SK-N-SH (cell line): ENCODE measurements at regions of chr5 and their contacts with region 1.

Region 1: DNA sequence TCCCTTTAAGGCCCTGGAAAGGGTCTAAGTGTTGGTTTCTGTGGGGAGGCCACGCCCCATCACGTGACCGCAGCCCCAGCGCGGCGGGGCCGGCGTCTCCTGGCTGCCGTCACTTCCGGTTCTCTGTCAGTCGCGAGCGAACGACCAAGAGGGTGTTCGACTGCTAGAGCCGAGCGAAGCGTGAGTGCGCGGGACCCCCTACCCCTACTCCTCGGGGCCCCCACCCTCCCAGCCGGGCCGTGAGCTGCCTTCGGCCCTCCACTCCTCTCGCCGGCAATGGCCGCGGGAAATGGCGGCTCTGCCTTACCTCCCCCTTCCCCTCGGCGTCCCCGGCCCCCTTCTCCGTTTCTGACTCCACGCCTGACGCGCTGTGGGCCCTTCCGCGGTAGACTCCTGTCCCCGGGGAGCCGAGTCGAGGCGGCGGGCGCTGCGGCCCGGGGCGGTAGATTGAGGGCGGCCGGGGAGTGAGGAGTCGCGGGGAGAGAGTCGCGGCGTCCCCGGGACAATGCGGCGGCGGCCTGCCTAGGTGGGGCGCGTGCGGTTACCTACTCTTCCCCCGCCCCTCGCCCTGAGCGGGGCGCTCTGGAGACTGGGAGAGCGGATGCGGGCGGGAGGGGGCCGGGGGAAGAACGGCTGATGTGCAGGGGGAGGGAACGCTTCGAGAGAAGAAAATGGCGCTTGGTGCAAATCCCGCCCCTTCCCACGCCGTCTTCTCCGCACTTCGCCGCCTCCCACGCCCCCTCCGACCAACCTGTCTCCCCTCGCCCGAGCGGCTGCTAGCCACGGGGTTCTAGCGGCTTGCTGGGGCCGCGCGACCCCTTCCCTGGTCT is at the start of gene SUB1:
- DNase-seq: peak; percentile 96
- H3K4me3 ChIP-seq: peak within 1 kb of the TSS; percentile 78
- H3K27ac ChIP-seq: peak within 1 kb of the TSS; percentile 92 to 99
- H3K4me1 ChIP-seq: peaks cover 5 to 7% of the 10 kb centered on the region in 2 experiments; a peak in 3 of 4 replicates
- H3K27me3 ChIP-seq: no peaks in the 10 kb centered on the region
- CTCF ChIP-seq: peak; percentile 29; the same call in 1 of the 2 replicates
- EP300 ChIP-seq: no peak; a peak in 1 of 4 replicates
- RAD21 ChIP-seq: no peak
- polyA plus RNA-seq, gene SUB1: 50.8 and 55.4 TPM in 2 replicates

Region 2: DNA sequence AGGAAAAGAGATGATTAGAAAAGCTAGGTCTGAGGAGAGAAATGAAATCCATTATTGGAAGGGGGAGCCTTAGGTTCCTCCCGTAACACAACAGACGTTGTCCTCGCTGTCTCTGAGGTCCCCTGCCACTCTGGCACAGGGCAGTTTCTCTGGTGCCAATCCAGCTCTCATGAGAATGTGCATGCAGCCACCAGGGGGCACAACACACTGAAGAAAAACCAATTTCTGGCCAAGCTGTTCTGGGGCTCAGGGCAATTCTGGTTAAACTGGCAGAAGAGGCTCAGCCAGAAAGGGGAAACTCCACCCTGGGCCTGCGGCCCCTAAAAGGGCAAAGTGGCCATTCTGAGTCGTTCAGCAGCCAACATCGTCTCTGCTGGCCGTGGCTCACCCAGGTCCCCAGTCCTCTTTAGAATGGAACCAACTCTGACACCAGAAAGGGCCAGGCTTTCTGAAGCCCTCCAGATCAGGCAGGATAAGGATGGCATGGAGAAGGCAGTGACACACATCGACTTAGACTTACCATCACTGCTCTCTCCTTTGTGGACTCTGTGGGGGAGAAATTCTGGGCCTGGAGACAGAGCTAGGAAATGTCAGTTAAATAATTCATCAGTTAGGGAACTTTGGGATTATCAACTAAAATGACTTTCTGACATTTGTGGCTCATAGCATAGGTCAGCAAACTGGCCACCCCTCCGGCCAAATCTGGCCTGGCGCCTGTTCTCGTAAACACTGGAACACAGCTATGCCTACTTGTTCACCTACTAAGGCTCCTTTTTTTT is 353.0 kb before region 1 on chr5:
- CTCF ChIA-PET with region 1: interaction called, 10 read pairs
- POLR2A ChIA-PET with region 1: no interaction called
- DNase-seq: peak; percentile 71
- H3K4me3 ChIP-seq: no peak overlapping the region; a peak in 1 of 4 replicates
- H3K27ac ChIP-seq: no peak overlapping the region
- H3K4me1 ChIP-seq: peaks cover 0 to 9% of the 10 kb centered on the region in 2 experiments; a peak in 1 of 4 replicates
- H3K27me3 ChIP-seq: no peaks in the 10 kb centered on the region
- CTCF ChIP-seq: peak; percentile 86
- EP300 ChIP-seq: no peak
- RAD21 ChIP-seq: peak; percentile 83

Region 3: GRCh38 chr5:32329308-32329834 is 256.3 kb before region 1 on chr5:
- CTCF ChIA-PET with region 1: no interaction called
- POLR2A ChIA-PET with region 1: no interaction called
- DNase-seq: peak; percentile 72
- H3K4me3 ChIP-seq: no peak overlapping the region
- H3K27ac ChIP-seq: no peak overlapping the region
- H3K4me1 ChIP-seq: no peaks in the 10 kb centered on the region
- H3K27me3 ChIP-seq: no peaks in the 10 kb centered on the region
- CTCF ChIP-seq: peak; percentile 57
- EP300 ChIP-seq: no peak
- RAD21 ChIP-seq: peak; percentile 79

Region 4: GRCh38 chr5:32476891-32477290 is 108.8 kb before region 1 on chr5:
- CTCF ChIA-PET with region 1: interaction called, 28 read pairs
- POLR2A ChIA-PET with region 1: no interaction called
- DNase-seq: no peak
- H3K4me3 ChIP-seq: no peak overlapping the region
- H3K27ac ChIP-seq: no peak overlapping the region
- H3K4me1 ChIP-seq: no peaks in the 10 kb centered on the region
- H3K27me3 ChIP-seq: no peaks in the 10 kb centered on the region; the same call in 1 of the 2 replicates
- CTCF ChIP-seq: no peak
- EP300 ChIP-seq: no peak
- RAD21 ChIP-seq: no peak

Region 5: DNA sequence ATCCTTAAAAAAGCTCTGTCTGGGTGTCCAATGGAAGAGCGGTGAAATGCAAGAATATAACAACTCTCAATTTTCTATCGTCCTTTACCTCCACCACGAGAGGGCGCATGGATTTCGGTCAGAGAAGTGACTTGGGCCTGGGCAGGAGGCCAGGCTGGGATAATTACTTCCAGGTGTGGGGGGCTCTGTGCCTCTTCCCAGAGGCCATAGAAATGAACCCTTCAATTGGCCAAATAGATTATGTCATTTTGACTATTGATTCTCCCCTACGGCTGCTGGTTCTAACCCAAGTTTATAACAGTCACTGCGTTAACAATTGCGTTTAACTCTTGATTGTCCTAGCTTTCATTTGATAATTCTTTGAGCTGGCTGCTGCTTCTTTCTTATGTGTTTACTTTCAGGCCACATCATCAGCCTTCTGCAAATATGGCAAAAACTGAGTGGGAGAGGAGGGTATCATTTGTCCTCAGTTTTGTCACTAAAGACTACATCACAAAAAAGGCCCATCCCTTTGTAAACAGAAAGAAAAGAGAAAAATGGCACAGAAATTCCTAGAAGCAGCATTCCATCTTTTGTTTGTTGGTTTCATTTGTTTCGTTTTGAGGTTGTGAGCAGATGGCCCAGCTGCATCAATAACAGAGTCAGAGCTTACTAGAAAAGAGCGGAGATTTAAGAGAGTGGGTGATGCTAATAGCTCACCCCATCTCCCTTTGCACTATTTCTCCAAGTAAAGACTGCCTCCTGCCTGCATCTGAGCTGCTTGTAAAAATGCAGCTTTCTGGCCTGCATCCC is 95.7 kb before region 1 on chr5:
- CTCF ChIA-PET with region 1: interaction called, 183 read pairs
- POLR2A ChIA-PET with region 1: interaction called, 7 read pairs
- DNase-seq: peak; percentile 80
- H3K4me3 ChIP-seq: peak overlapping the region in 1 of 2 experiments; percentile 18; a peak in 1 of 4 replicates
- H3K27ac ChIP-seq: peak overlapping the region; percentile 36 to 62; a peak in 3 of 4 replicates
- H3K4me1 ChIP-seq: peaks cover 5 to 7% of the 10 kb centered on the region in 2 experiments; a peak in 3 of 4 replicates
- H3K27me3 ChIP-seq: no peaks in the 10 kb centered on the region
- CTCF ChIP-seq: peak; percentile 82
- EP300 ChIP-seq: peak in 1 of 2 experiments; percentile 80; a peak in 3 of 4 replicates
- RAD21 ChIP-seq: peak; percentile 91

Region 6: DNA sequence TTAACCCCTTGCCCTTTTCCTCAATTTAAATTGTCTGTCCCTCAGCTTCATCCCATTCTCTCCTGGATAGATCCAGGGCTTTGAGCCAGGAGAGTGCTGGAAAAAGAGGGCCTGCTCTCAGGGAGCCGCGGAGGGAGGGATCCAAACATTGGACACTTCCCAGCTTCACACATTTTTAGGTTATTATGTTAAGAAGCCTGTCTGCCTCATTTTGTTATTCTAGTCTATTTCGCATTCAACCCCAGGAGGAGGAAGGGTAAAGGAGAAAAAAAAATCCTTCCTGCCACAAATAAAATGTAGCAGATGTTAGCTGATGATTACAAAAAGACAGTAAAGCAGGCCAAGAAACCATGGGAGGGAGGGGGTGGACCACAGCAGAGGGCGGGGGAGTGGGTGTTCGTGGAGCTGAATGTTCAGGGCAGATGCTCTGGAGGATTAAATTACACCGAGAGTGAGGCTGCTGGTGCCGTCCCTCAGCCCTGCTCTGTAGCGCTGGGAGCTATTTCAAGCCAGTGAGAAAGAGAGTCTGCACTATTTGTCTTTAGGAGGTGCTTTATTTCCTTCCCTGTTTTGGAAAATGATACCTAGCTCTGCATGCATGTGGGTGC is 80.6 kb before region 1 on chr5:
- CTCF ChIA-PET with region 1: interaction called, 29 read pairs
- POLR2A ChIA-PET with region 1: no interaction called
- DNase-seq: peak; percentile 86
- H3K4me3 ChIP-seq: peak overlapping the region; percentile 28 to 45
- H3K27ac ChIP-seq: peak overlapping the region; percentile 87 to 93
- H3K4me1 ChIP-seq: peaks cover 30 to 32% of the 10 kb centered on the region in 2 experiments
- H3K27me3 ChIP-seq: no peaks in the 10 kb centered on the region
- CTCF ChIP-seq: no peak
- EP300 ChIP-seq: peak in 1 of 2 experiments; percentile 77; a peak in 2 of 4 replicates
- RAD21 ChIP-seq: no peak

Region 7: GRCh38 chr5:32523625-32524024 is 62.0 kb before region 1 on chr5:
- CTCF ChIA-PET with region 1: interaction called, 16 read pairs
- POLR2A ChIA-PET with region 1: no interaction called
- DNase-seq: peak; percentile 44
- H3K4me3 ChIP-seq: no peak overlapping the region
- H3K27ac ChIP-seq: peak overlapping the region in 1 of 2 experiments; percentile 75; a peak in 1 of 4 replicates
- H3K4me1 ChIP-seq: no peaks in the 10 kb centered on the region
- H3K27me3 ChIP-seq: no peaks in the 10 kb centered on the region
- CTCF ChIP-seq: peak; percentile 28
- EP300 ChIP-seq: no peak
- RAD21 ChIP-seq: 0 out of 2 replicates have a peak, but pooled peaks have one; percentile 21

Region 8: DNA sequence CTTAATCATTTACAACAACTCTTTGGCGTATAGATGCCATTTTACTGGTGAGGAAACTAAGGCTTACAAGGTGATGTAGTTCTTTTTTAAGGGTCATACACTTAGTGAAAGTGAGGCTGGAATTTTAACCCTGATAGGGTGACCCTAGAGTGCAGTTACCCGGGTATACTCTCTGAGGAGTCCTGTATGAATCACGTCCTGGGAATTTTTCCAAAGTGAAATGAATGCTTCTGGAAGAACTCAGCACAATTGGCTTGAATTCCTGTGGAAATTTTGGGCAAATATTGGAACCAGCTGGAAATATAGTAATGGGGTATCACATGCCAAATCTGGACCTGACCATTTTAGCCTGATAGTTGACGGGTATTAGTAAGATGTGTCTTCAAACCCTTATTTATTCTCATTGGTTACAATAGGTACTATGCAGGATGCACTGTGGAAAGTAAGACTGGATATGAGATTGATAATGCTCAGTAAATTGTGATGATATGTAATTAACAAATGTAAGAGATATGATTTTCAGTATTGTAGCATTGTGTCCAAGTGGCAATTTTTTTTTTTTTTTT is 14.5 kb after region 1 on chr5:
- CTCF ChIA-PET with region 1: interaction called, 27 read pairs
- POLR2A ChIA-PET with region 1: no interaction called
- DNase-seq: no peak
- H3K4me3 ChIP-seq: no peak overlapping the region
- H3K27ac ChIP-seq: peak overlapping the region; percentile 81 to 82; a peak in 3 of 4 replicates
- H3K4me1 ChIP-seq: peaks cover 0 to 30% of the 10 kb centered on the region in 2 experiments; a peak in 3 of 4 replicates
- H3K27me3 ChIP-seq: no peaks in the 10 kb centered on the region
- CTCF ChIP-seq: no peak
- EP300 ChIP-seq: peak; percentile 50 to 89; a peak in 3 of 4 replicates
- RAD21 ChIP-seq: no peak

Region 9: DNA sequence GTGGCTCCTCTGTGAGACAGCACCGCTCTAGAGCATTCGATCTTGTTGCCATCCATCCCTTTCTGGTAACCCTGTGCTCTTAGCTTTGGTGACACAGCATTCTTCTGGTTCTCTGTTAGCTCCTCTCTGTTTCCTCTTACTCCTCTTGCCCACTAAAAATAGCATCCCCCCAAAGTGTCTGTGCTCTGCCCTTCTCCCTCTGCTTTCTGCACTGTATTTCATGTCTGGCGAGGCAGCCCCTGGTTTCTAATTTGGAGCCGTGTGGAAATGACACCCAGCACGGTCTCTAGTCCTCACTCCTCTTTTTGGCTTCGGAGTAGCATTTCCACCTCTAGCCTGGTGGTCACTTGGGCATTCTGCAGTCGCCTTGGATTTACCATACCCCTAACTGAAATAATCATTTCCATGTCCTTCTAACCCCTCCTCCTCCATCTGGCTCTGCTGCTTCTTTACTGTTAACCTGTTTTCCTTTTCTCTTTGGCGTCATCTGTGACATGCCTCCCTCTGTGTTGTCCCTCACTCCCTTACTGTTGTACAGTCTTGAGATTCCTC is 149.2 kb after region 1 on chr5:
- CTCF ChIA-PET with region 1: no interaction called
- POLR2A ChIA-PET with region 1: no interaction called
- DNase-seq: no peak
- H3K4me3 ChIP-seq: no peak overlapping the region
- H3K27ac ChIP-seq: peak overlapping the region in 1 of 2 experiments; percentile 36; a peak in 2 of 4 replicates
- H3K4me1 ChIP-seq: peaks cover 0 to 15% of the 10 kb centered on the region in 2 experiments; a peak in 1 of 4 replicates
- H3K27me3 ChIP-seq: no peaks in the 10 kb centered on the region
- CTCF ChIP-seq: peak; percentile 15
- EP300 ChIP-seq: no peak
- RAD21 ChIP-seq: no peak

Region 10: DNA sequence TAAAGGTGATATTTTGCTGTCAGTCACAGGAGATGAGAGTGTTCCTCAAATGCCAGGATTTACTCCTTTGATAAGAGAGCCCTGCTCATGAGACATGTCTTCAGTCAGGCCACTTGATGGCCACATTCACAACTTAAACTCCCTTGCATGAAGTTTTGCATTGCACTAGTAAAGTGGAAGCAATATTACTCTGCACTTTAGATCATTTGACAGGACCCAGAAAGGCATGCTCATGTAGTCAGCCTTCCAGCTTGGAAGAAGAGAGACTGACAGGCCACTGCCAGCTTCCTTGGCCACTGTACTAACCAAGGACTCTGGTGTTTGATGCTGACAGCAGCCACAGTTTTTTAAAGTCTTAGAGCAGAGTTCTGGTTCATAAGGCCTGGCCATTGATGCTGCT is 168.1 kb after region 1 on chr5:
- CTCF ChIA-PET with region 1: no interaction called
- POLR2A ChIA-PET with region 1: no interaction called
- DNase-seq: no peak
- H3K4me3 ChIP-seq: no peak overlapping the region
- H3K27ac ChIP-seq: peak overlapping the region in 1 of 2 experiments; percentile 75; a peak in 2 of 4 replicates
- H3K4me1 ChIP-seq: peaks cover 0 to 7% of the 10 kb centered on the region in 2 experiments; a peak in 2 of 4 replicates
- H3K27me3 ChIP-seq: no peaks in the 10 kb centered on the region
- CTCF ChIP-seq: peak; percentile 21; the same call in 1 of the 2 replicates
- EP300 ChIP-seq: no peak
- RAD21 ChIP-seq: no peak